ENCODE measurements at regions of chr6 and their contacts with region 1.

Region 1: GRCh38 chr6:34248727-34249551 is at the start of gene SMIM29:
- DNase-seq: peak; percentile 97 to 98 (median 97)
- H3K4me3 ChIP-seq: peak within 1 kb of the TSS; percentile 22 to 83 (median 68)
- H3K27ac ChIP-seq: peak within 1 kb of the TSS; percentile 28 to 90 (median 83)
- H3K4me1 ChIP-seq: peaks cover 16 to 23% of the 10 kb centered on the region in 2 donors
- H3K27me3 ChIP-seq: no peaks in the 10 kb centered on the region
- CTCF ChIP-seq: peak; percentile 71 to 98 (median 90)
- POLR2A ChIP-seq: peak; percentile 60 to 87
- total RNA-seq, gene SMIM29: 21.4 to 53.7 (median 31.2) TPM

Region 2: GRCh38 chr6:34414999-34415858 is 166.3 kb after region 1 on chr6:
- intact Hi-C with region 1: loop called (anchors 5 kb)
- DNase-seq: peak; percentile 65 to 91 (median 77)
- H3K4me3 ChIP-seq: peak overlapping the region in 1 of 4 donors; percentile 17
- H3K27ac ChIP-seq: peak overlapping the region; percentile 67 to 88 (median 77)
- H3K4me1 ChIP-seq: peaks cover 8 to 17% of the 10 kb centered on the region in 2 donors
- H3K27me3 ChIP-seq: no peaks in the 10 kb centered on the region
- CTCF ChIP-seq: peak; percentile 40 to 96 (median 86)
- POLR2A ChIP-seq: no peak

Measured in adrenal gland (tissue), 19 donors.